PC-3 (cell line): ENCODE measurements at regions of chr20 and their contacts with region 1.

Region 1: GRCh38 chr20:19815553-19815991 is 57.5 kb downstream of the RIN2 start:
- DNase-seq: peak; percentile 99
- ATAC-seq: peak; percentile 88
- H3K4me3 ChIP-seq: no peak overlapping the region
- H3K27ac ChIP-seq: peak overlapping the region; percentile 98
- H3K4me1 ChIP-seq: peaks cover 50% of the 10 kb centered on the region
- H3K27me3 ChIP-seq: no peaks in the 10 kb centered on the region
- CTCF ChIP-seq: no peak

Region 2: GRCh38 chr20:19794941-19795340 is 20.6 kb before region 1 on chr20:
- CTCF ChIA-PET with region 1: no interaction called
- POLR2A ChIA-PET with region 1: no interaction called
- intact Hi-C with region 1: no loop called
- DNase-seq: no peak
- ATAC-seq: no peak
- H3K4me3 ChIP-seq: no peak overlapping the region
- H3K27ac ChIP-seq: no peak overlapping the region
- H3K4me1 ChIP-seq: no peaks in the 10 kb centered on the region
- H3K27me3 ChIP-seq: no peaks in the 10 kb centered on the region
- CTCF ChIP-seq: no peak

Region 3: GRCh38 chr20:19828232-19828631 is 12.7 kb after region 1 on chr20:
- CTCF ChIA-PET with region 1: interaction called, 18 read pairs
- POLR2A ChIA-PET with region 1: interaction called, 20 read pairs
- intact Hi-C with region 1: loop called (anchors 1 kb)
- DNase-seq: peak; percentile 97
- ATAC-seq: peak; percentile 88
- H3K4me3 ChIP-seq: no peak overlapping the region
- H3K27ac ChIP-seq: peak overlapping the region; percentile 95
- H3K4me1 ChIP-seq: peaks cover 45% of the 10 kb centered on the region
- H3K27me3 ChIP-seq: no peaks in the 10 kb centered on the region
- CTCF ChIP-seq: peak; percentile 67

Region 4: GRCh38 chr20:19880256-19881079 is 64.9 kb after region 1 on chr20:
- CTCF ChIA-PET with region 1: no interaction called
- POLR2A ChIA-PET with region 1: interaction called, 3 read pairs
- intact Hi-C with region 1: loop called (anchors 1 kb)
- DNase-seq: peak; percentile 95
- ATAC-seq: peak; percentile 86
- H3K4me3 ChIP-seq: peak overlapping the region; percentile 29; the same call in 1 of the 2 replicates
- H3K27ac ChIP-seq: peak overlapping the region; percentile 96
- H3K4me1 ChIP-seq: peaks cover 50% of the 10 kb centered on the region
- H3K27me3 ChIP-seq: no peaks in the 10 kb centered on the region
- CTCF ChIP-seq: no peak

Region 5: DNA sequence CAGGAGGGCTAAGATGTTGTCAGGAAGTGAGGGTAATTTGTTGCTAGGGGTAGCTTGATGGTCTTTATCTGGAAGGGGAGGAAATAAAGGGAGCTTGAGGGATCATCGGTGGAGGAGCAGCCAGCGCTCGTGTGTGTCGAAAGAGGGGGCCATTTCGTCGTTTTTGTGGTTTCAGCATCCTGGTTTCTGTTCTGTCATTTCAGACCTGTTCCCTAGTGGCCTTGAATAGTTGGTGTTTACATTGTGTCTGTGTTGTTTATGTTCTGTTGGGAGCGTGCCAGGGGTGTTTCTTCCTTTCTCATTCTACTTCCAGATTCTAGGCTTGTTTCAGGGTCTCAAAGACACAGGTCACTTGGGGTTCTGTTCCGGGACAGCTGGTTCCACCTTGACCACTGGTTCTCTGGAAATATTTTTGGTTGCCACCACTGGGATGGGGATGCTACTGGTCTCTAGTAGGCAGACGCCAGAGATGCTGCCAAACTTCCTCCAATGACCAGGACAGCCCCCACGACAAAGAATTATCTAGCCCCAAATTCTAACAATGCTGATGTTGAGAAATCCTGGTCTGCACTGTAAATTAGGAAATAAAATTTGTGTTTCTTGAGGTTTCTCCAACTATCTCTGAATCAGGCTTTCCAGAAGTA is 87.7 kb after region 1 on chr20:
- CTCF ChIA-PET with region 1: no interaction called
- POLR2A ChIA-PET with region 1: interaction called, 14 read pairs
- intact Hi-C with region 1: no loop called
- DNase-seq: no peak
- ATAC-seq: no peak
- H3K4me3 ChIP-seq: no peak overlapping the region
- H3K27ac ChIP-seq: no peak overlapping the region
- H3K4me1 ChIP-seq: peaks cover 8% of the 10 kb centered on the region
- H3K27me3 ChIP-seq: no peaks in the 10 kb centered on the region
- CTCF ChIP-seq: no peak

Region 6: GRCh38 chr20:19995220-19995863 is 179.8 kb after region 1 on chr20:
- CTCF ChIA-PET with region 1: no interaction called
- POLR2A ChIA-PET with region 1: interaction called, 4 read pairs
- intact Hi-C with region 1: loop called (anchors 1 kb)
- DNase-seq: peak; percentile 77
- ATAC-seq: no peak
- H3K4me3 ChIP-seq: no peak overlapping the region
- H3K27ac ChIP-seq: peak overlapping the region; percentile 96
- H3K4me1 ChIP-seq: peaks cover 53% of the 10 kb centered on the region
- H3K27me3 ChIP-seq: no peaks in the 10 kb centered on the region
- CTCF ChIP-seq: peak; percentile 97